A673 (cell line): ENCODE measurements at regions of chr22 and their contacts with region 1.

Region 1: GRCh38 chr22:39543095-39543494 is 10.5 kb upstream of the RPS19BP1 start:
- DNase-seq: peak; percentile 81
- H3K4me3 ChIP-seq: no peak overlapping the region
- H3K27ac ChIP-seq: no peak overlapping the region
- H3K4me1 ChIP-seq: no peaks in the 10 kb centered on the region
- H3K27me3 ChIP-seq: peaks cover 3% of the 10 kb centered on the region
- CTCF ChIP-seq: peak; percentile 80

Region 2: GRCh38 chr22:39634671-39635405 is 91.7 kb after region 1 on chr22:
- CTCF ChIA-PET with region 1: no interaction called
- POLR2A ChIA-PET with region 1: no interaction called
- intact Hi-C with region 1: no loop called
- DNase-seq: peak; percentile 91
- H3K4me3 ChIP-seq: no peak overlapping the region
- H3K27ac ChIP-seq: no peak overlapping the region
- H3K4me1 ChIP-seq: peaks cover 19% of the 10 kb centered on the region
- H3K27me3 ChIP-seq: no peaks in the 10 kb centered on the region
- CTCF ChIP-seq: no peak

Region 3: DNA sequence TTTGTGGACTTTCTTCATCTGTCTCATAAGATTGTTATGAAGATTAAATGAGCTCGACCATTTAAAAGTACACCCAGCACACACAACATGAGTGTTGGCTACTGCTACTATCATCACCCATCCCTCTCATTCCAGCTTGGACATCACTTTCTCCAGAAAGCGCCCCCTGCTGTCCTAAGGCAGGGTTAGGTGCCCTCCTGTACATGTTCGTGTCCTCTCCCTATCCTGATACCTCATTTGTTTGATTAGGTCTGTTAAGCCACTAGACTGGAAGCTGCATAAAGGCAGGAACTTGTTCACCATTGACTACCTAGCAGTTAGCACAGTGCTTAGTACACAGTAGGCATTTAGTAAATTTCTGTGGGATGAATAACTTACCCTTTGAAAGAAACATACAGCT is 265.0 kb after region 1 on chr22:
- CTCF ChIA-PET with region 1: interaction called, 3 read pairs
- POLR2A ChIA-PET with region 1: no interaction called
- intact Hi-C with region 1: loop called (anchors 10 kb)
- DNase-seq: peak; percentile 66
- H3K4me3 ChIP-seq: no peak overlapping the region
- H3K27ac ChIP-seq: no peak overlapping the region
- H3K4me1 ChIP-seq: no peaks in the 10 kb centered on the region
- H3K27me3 ChIP-seq: peaks cover 44% of the 10 kb centered on the region
- CTCF ChIP-seq: peak; percentile 74

Region 4: GRCh38 chr22:39967103-39967829 is 424.2 kb after region 1 on chr22:
- CTCF ChIA-PET with region 1: no interaction called
- POLR2A ChIA-PET with region 1: no interaction called
- intact Hi-C with region 1: no loop called
- DNase-seq: no peak
- H3K4me3 ChIP-seq: no peak overlapping the region
- H3K27ac ChIP-seq: no peak overlapping the region
- H3K4me1 ChIP-seq: no peaks in the 10 kb centered on the region
- H3K27me3 ChIP-seq: peaks cover 24% of the 10 kb centered on the region
- CTCF ChIP-seq: no peak

Region 5: GRCh38 chr22:40024201-40025061 is 481.3 kb after region 1 on chr22:
- CTCF ChIA-PET with region 1: interaction called, 12 read pairs
- POLR2A ChIA-PET with region 1: no interaction called
- intact Hi-C with region 1: loop called (anchors 2 kb)
- DNase-seq: peak; percentile 81
- H3K4me3 ChIP-seq: no peak overlapping the region
- H3K27ac ChIP-seq: no peak overlapping the region
- H3K4me1 ChIP-seq: no peaks in the 10 kb centered on the region
- H3K27me3 ChIP-seq: no peaks in the 10 kb centered on the region
- CTCF ChIP-seq: peak; percentile 87